AG04449 (cell line): ENCODE measurements at regions of chr17 and their contacts with region 1.

Region 1: DNA sequence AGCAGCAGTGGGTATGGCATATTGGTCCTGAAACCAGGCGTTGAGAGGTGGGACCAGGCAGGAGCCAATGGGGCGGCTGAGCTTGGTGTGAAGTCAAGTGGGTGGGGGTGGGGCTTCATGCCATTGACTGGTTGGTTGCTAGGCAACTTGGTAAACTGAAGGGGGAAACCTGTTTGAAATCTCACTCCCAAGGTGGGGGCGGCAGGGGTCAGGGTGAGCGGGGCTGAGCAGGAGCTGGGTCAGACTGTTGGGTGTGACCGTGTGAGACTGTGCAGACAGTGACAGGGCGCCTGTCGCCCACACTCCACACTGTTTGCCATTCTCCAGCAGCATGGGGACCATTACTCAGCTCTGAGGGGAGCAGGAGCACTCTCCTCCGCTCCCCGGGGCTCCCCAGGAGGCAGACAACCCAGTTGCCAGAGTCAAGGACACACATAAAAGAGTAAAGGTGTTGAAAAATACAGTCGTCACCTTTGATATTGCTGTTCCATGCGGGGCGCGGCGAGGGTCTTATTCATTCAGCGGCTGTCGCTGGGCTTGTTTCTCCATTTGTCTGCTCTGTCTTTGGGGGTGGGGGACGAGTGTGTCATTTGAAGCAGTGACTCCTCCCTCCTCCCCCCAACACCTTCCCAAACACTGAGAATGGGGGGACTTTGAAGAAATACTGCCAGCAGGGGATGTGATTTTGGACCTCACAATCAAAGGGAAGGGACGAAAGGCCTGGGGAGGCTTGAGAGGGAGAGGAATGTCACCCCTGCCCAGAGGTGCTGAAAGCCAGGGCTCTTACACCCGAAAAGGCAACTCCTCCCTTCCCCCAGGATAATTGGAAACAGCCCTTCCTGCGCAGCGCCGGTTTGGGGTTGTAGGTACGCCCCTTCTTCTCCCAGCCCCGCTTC is 1.2 kb upstream of the EFNB3 start:
- DNase-seq: no peak
- H3K4me3 ChIP-seq: peak overlapping the region; percentile 58
- CTCF ChIP-seq: no peak

Region 2: DNA sequence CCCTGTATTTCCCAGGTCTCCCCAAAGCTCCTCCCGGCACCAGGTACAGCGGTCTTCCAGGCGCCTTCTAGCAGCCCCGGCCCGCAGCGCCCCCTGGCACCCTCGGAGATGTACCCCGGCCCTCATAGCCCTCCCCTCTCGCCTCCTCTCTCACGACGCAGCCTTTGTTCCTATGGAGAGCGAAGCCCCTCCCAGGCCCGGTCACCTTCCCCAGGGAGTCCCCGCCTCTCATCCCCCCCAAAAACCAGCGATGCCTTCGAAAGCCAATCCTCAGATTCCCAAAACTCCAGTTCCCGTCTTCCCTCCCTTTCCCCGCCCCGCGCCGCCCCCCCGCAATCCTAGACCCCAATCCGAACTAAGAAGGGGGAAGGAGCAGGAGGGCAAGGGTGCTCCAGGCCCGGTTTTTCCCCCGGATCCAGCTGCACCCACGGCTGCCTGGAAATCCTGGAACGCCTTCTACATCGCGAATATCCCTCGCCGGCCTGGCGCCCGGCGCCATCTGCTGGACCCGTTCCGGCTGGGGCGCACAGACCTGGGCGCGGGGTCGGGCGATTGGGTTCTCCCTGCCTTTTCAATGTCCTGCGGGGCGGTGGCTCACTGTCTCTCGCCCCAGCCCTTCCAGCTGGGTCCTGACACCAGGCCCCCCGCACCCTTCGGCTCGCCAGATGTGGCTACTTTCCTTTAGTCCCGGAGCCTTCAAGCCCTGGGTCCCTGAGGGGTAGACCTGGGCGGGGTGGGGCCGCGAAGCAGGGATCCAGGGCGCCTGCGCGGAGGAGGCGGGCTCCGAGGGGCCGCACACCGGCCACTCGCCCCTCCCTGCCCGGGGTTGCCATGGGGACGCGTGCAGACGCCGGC is 13.3 kb after region 1 on chr17 and contains the start of gene DNAH2:
- CTCF ChIA-PET with region 1: interaction called, 35 read pairs
- POLR2A ChIA-PET with region 1: interaction called, 6 read pairs
- DNase-seq: peak; percentile 24
- H3K4me3 ChIP-seq: peak within 1 kb of the TSS; percentile 71
- CTCF ChIP-seq: peak; percentile 69

Region 3: GRCh38 chr17:7803981-7804380 is 100.1 kb after region 1 on chr17:
- CTCF ChIA-PET with region 1: no interaction called
- POLR2A ChIA-PET with region 1: no interaction called
- DNase-seq: no peak
- H3K4me3 ChIP-seq: no peak overlapping the region
- CTCF ChIP-seq: no peak

Region 4: DNA sequence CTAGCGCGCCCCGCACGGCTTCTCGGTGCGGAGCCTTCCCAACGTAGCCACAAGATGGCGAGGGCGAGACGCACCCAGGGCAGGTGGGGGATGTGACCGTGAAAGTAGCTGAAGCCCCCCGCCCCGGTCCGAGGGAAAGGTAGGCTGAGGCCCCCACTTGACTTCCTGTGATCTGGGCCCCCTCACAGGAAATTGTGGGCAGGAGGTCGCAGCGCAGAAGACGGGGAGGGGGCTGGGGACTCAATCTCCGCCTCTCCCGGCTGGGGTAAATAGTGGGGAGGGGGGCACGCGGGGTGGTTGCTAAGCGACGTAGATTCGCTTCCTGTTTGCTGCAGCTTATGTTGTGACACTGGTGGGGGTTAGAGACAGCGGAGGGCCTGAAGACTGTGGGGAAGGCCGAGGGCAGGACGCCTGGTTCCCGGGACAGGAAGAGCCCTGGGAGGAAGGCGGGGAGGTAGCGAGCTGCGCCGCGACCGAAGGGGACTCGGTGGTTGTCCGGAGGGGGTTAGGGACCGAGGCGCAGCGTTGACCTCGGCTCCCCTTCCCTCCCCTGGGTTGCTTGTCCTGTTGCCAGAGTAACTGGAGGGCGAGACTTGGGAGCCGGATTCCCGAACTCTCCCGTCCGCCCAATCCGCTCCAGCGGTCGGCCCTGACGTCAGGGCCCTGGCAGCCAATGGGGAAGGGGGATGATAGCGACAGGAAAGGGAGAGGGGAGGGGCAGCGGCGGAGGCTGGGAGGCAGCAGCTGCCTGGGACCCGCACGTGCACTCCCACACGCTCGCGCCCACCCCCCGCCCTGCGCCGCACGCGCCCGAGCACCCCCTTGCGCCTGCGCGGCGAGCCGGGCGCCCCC is 131.4 kb after region 1 on chr17:
- CTCF ChIA-PET with region 1: no interaction called
- POLR2A ChIA-PET with region 1: no interaction called
- DNase-seq: peak; percentile 91
- H3K4me3 ChIP-seq: peak overlapping the region; percentile 83
- CTCF ChIP-seq: peak; percentile 95